PC-9 (cell line): ENCODE measurements at regions of chr21 and their contacts with region 1.

Region 1: DNA sequence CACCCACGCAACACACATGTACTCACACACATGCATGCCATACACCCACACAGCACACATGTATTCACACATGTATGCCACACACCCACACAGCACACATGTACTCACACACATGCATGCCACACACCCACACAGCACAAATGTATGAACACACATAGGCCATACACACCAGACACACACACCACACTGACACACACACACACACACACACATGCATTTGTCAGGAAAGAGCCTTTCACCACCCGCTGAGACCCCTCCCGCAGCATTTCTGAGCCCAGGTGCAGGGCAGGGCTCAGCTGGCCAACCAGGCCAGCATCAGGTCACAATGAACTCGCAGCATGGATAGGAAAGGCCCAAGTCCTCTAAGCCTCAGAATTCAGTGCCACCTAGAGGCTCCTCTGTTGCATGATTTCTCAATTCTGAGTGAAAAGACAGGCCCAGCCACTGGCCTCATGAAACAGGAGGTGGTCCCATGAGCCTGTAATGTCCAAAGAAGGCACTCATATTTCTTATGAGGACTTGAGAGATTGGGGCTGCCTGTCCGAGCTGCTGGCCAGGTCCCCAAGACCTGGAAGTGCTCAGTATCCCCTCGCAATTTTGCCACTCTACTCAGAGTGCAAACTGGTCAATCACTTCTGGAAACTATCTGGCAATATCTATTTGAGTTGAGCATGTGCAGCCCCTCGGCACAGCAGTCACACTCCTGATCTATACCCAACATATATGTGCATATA is 57.3 kb downstream of the PSMG1 start:
- DNase-seq: peak; percentile 43 to 46
- H3K4me3 ChIP-seq: no peak overlapping the region
- H3K27ac ChIP-seq: no peak overlapping the region
- H3K4me1 ChIP-seq: no peaks in the 10 kb centered on the region
- H3K27me3 ChIP-seq: no peaks in the 10 kb centered on the region
- CTCF ChIP-seq: peak; percentile 63; the same call in 1 of the 2 replicates

Region 2: DNA sequence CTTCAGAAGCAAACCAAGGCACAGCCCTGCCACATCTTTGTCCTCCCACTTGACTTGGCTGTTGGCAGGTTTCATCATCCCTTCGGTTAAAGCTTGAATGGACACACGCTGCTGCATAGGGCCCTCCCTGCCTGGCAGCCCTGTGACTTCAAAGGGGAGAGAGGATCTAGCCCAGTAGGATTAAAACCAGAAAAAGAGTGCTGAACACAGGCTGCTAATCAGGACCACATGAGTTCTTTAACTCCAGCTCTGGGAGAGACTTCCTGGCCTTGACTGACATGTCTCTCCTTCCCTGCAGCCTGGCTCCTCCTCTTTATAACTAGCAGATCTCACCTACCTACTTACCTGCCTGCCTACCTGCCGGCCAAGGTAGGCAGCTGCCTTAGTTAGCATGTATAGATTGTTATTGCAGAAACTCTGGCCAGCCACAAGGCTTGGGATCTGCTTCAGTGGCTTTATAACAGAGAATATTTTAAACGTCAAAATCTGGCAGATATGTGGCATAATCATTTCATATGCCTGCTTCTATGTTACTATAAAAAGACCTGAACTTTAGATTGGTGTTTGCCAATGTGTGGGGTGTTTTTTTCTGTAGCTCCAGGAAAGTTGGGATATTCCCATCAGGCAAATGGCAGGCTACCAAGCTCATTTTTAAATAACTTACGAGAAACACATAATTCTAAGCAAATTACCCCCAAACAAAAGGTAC is 677.1 kb before region 1 on chr21:
- CTCF ChIA-PET with region 1: no interaction called
- POLR2A ChIA-PET with region 1: no interaction called
- intact Hi-C with region 1: no loop called
- DNase-seq: no peak
- H3K4me3 ChIP-seq: no peak overlapping the region
- H3K27ac ChIP-seq: no peak overlapping the region
- H3K4me1 ChIP-seq: no peaks in the 10 kb centered on the region
- H3K27me3 ChIP-seq: 0 out of 2 replicates have a peak, but pooled peaks cover 12% of the 10 kb centered on the region
- CTCF ChIP-seq: no peak

Region 3: DNA sequence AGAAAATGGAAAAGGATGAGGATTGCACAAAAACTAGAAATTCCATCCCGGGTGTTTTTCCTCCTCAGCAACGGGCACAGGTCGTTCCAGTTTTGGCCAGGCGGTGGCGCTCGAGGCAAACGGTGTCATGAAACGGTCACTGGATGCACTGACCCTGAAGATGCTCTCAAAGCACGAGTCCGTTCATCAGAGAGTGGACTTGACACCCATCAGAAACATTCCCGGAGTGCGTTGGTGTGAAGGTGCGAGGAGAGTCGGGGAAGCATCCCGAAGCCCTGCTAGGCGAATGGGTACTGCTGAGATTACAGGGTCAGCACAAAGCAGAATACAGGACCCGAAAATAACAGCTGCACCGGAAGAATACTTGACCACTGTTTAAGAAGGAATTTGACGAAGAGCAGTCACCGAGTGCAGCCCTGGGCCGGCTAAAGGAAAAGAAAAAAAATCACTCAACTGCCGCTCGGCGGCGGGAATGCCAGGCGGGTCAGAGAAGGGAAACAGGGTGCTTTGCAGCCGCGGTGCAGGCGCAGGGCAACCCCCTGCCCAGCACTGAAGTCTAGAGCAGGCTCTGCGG is 391.9 kb before region 1 on chr21:
- CTCF ChIA-PET with region 1: no interaction called
- POLR2A ChIA-PET with region 1: no interaction called
- intact Hi-C with region 1: loop called (anchors 1 kb)
- DNase-seq: peak; percentile 44 to 81
- H3K4me3 ChIP-seq: no peak overlapping the region
- H3K27ac ChIP-seq: no peak overlapping the region
- H3K4me1 ChIP-seq: no peaks in the 10 kb centered on the region
- H3K27me3 ChIP-seq: no peaks in the 10 kb centered on the region
- CTCF ChIP-seq: peak; percentile 89

Region 4: GRCh38 chr21:39137248-39138178 is 11.6 kb after region 1 on chr21:
- CTCF ChIA-PET with region 1: no interaction called
- POLR2A ChIA-PET with region 1: no interaction called
- intact Hi-C with region 1: no loop called
- DNase-seq: no peak
- H3K4me3 ChIP-seq: no peak overlapping the region
- H3K27ac ChIP-seq: no peak overlapping the region
- H3K4me1 ChIP-seq: no peaks in the 10 kb centered on the region
- H3K27me3 ChIP-seq: no peaks in the 10 kb centered on the region
- CTCF ChIP-seq: no peak